Mammary epithelial cell (primary cell): ENCODE measurements at regions of chr12 and their contacts with region 1.

Region 1: GRCh38 chr12:76927170-76927784 is 48.5 kb upstream of the CSRP2 start:
- DNase-seq: peak; percentile 25
- H3K4me3 ChIP-seq: no peak overlapping the region
- H3K27ac ChIP-seq: no peak overlapping the region
- H3K4me1 ChIP-seq: no peaks in the 10 kb centered on the region
- H3K27me3 ChIP-seq: no peaks in the 10 kb centered on the region
- CTCF ChIP-seq: peak; percentile 65 to 80

Region 2: DNA sequence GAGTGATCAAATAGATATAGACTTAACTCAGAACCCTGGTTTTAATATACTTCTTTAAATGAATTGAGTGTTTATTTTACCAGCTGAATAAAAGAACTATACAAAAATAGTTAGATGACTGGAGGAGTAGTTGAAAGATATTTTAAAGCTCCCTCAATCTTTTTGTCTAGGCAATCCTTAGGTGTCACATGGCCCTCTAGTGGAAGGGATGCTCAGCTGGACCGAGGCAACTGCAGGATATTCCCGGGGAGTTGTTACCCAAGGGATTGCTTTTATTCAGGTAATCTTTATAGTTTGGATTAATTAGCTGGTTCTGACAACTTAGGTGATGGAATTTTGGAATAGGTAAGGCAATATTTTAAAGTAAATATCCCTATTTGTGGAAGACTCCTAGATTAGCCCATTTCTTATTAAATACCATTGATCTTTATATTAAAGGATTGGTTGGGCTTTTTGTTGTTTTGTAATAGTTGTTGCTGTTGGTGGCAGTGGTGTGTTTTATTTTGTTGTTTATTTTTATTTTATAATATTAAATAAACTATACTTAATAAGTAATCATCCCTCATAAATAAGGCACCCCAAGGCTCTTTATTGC is 106.3 kb before region 1 on chr12:
- CTCF ChIA-PET with region 1: interaction called, 3 read pairs
- dilution Hi-C with region 1: no loop called
- in situ Hi-C with region 1: no loop called
- intact Hi-C with region 1: loop called (anchors 1 kb)
- DNase-seq: peak; percentile 29
- H3K4me3 ChIP-seq: no peak overlapping the region
- H3K27ac ChIP-seq: no peak overlapping the region
- H3K4me1 ChIP-seq: no peaks in the 10 kb centered on the region
- H3K27me3 ChIP-seq: no peaks in the 10 kb centered on the region
- CTCF ChIP-seq: peak; percentile 74

Region 3: DNA sequence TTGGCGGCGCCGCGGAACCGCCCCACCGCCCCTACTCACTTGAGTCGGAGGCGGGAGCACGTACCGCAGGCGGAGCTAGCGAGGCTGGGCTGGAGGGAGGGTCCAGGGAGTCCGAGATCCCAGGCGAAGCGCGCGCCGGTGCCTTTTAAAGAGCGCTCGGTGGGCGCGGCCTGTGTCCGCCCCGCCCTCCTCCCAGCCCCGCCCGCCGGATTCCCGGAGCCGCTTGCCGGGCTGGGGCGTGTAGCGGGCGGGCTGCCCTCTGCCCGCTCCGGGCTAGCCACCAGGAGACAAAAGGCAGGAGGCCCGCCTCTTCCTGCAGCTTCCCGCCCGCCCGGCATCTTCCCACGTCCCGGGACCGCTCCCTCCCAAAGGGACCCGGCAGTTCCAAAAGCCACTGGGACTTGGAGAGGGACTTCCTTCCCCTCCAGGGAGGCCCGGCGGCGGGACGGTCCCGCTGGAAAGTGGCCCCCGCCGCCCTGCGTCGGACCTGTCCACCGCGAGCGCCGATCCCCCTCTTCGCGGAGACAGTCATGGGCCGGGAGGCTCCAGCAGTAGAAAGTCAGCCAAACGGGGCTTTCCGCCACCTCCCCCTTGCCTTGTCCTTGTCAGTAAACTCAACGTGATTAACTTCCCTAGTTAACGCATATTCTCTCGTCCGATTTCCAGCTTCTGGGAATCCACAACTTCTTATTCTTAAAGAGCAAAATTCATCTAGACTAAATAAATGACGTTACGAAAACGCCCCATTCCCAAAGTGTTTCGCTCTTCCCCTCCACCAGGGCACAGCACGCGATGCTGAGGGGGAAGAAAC is 48.2 kb before region 1 on chr12 and contains the start of gene CSRP2:
- CTCF ChIA-PET with region 1: no interaction called
- dilution Hi-C with region 1: no loop called
- in situ Hi-C with region 1: no loop called
- intact Hi-C with region 1: loop called (anchors 1 kb)
- DNase-seq: peak; percentile 90
- H3K4me3 ChIP-seq: peak within 1 kb of the TSS; percentile 72 to 81 (median 80)
- H3K27ac ChIP-seq: peak within 1 kb of the TSS; percentile 81
- H3K4me1 ChIP-seq: peaks cover 46% of the 10 kb centered on the region
- H3K27me3 ChIP-seq: no peaks in the 10 kb centered on the region
- CTCF ChIP-seq: peak in 1 of 2 donors; percentile 13
- total RNA-seq, gene CSRP2: 21.0 to 45.9 TPM